Upper lobe of right lung (tissue), 1 donor: ENCODE measurements at regions of chr2 and their contacts with region 1.

Region 1: DNA sequence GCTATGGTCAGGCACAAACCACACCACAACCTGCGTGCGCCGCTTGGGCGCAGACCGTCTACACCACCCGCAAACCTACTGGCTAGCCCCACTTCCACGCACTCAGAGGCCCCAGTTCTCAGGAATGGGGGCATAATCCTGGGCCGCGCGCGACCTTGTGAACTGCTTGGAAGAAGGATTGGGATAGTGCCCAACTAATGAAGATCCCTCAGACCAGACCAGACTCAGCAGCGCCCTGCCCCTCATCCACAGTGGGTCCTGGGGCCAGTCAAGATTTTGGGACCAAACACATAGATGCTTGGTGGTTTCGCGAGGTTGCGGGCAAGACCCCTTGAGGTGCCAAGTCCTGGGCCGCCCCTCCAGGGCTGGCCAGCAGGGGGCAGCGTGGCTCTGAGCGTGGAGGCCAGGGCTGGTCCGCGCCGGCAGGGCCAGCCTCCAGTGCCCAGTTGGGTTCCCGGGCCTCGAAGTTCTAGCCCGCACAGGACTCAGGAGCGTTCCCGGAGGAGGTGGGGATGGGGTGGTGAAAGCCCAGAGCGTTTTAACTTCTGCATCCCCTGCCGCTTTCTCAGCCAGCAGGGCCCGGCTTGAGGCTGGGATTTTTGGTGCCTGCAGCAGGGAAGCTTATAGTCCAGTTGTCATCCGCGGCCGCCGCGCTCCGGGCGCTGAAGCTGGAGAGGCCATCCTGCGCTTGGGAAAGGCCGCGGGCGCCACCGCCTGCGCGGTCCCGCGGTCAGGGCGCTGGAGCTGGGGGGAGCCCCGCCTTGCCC is 8.3 kb downstream of the OSR1 start:
- DNase-seq: peak; percentile 82
- ATAC-seq: peak; percentile 53
- H3K4me3 ChIP-seq: peak overlapping the region; percentile 6
- H3K27ac ChIP-seq: no peak overlapping the region
- H3K4me1 ChIP-seq: peaks cover 8% of the 10 kb centered on the region
- H3K27me3 ChIP-seq: peaks cover 43% of the 10 kb centered on the region
- CTCF ChIP-seq: peak; percentile 69

Region 2: GRCh38 chr2:18749912-18750526 is 600.1 kb before region 1 on chr2:
- intact Hi-C with region 1: loop called (anchors 10 kb)
- DNase-seq: no peak
- ATAC-seq: peak; percentile 59
- H3K4me3 ChIP-seq: no peak overlapping the region
- H3K27ac ChIP-seq: no peak overlapping the region
- H3K4me1 ChIP-seq: no peaks in the 10 kb centered on the region
- H3K27me3 ChIP-seq: no peaks in the 10 kb centered on the region
- CTCF ChIP-seq: peak; percentile 81